IMR-90 (cell line): ENCODE measurements at regions of chr11 and their contacts with region 1.

Region 1: GRCh38 chr11:35953081-35953760 is 9.4 kb downstream of the LDLRAD3 start:
- DNase-seq: no peak
- ATAC-seq: no peak
- H3K4me3 ChIP-seq: no peak overlapping the region
- H3K27ac ChIP-seq: no peak overlapping the region
- H3K4me1 ChIP-seq: no peaks in the 10 kb centered on the region
- H3K27me3 ChIP-seq: no peaks in the 10 kb centered on the region
- CTCF ChIP-seq: no peak
- POLR2A ChIP-seq: no peak
- RAD21 ChIP-seq: no peak

Region 2: DNA sequence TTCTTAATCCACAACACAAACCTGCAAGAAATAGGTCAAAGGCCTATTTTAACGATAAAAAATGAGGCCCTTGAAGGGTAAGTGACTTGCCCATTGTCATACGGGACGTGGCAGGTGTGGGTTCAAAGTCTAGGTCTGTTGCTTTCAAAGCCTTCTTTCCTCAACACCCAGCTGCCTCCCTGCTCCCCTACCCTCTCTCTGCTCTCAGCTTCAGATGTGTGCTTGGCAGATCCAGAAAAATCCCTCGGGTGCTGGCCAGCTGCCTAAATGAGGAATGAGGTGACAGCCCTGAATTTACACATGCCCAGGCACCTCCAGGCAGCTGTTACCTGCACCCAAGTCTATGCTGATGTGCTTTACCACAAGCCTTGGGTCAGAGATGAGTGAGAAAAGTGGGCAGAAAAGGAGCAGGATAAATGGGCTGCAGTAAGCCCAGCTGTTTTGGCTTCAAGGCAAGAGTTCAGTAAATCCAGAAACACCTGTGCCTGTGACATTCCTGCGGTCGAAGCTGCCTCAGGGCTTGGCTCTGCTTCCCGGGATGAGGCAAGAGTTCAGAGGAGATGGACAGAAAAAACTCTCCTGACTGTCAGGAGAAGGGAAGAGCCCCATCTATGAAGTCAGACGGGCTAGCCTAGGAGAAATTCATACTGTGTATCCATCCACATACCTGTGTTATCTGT is 59.3 kb before region 1 on chr11:
- CTCF ChIA-PET with region 1: no interaction called
- POLR2A ChIA-PET with region 1: no interaction called
- dilution Hi-C with region 1: no loop called
- in situ Hi-C with region 1: loop called (anchors 10 kb)
- intact Hi-C with region 1: no loop called
- DNase-seq: peak; percentile 35
- ATAC-seq: no peak
- H3K4me3 ChIP-seq: no peak overlapping the region
- H3K27ac ChIP-seq: no peak overlapping the region
- H3K4me1 ChIP-seq: no peaks in the 10 kb centered on the region
- H3K27me3 ChIP-seq: peaks cover 43% of the 10 kb centered on the region
- CTCF ChIP-seq: no peak
- POLR2A ChIP-seq: no peak
- RAD21 ChIP-seq: no peak

Region 3: DNA sequence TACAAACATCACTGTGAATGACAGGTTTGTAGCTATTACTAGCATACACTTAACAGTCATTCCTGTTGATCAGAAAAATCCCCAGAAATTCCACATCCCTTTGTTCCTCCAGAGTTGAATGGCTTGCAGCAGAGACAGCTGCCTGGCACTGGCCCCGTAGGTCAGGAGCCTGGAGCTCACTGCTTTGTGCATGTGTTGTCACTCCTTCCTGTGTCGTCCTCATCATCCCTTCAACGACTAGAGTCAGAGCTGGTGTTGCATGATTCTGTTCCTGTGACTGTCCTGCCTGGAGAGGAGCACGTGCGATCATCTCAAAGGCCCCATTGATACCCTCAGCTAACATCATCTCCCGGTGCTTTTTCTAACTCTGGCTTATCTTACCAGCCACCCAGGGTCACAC is 49.0 kb after region 1 on chr11:
- CTCF ChIA-PET with region 1: no interaction called
- POLR2A ChIA-PET with region 1: no interaction called
- dilution Hi-C with region 1: no loop called
- in situ Hi-C with region 1: no loop called
- intact Hi-C with region 1: no loop called
- DNase-seq: no peak
- ATAC-seq: no peak
- H3K4me3 ChIP-seq: no peak overlapping the region
- H3K27ac ChIP-seq: no peak overlapping the region
- H3K4me1 ChIP-seq: peaks cover 3% of the 10 kb centered on the region
- H3K27me3 ChIP-seq: no peaks in the 10 kb centered on the region
- CTCF ChIP-seq: no peak
- POLR2A ChIP-seq: no peak
- RAD21 ChIP-seq: no peak